A673 (cell line): ENCODE measurements at regions of chr6 and their contacts with region 1.

Region 1: DNA sequence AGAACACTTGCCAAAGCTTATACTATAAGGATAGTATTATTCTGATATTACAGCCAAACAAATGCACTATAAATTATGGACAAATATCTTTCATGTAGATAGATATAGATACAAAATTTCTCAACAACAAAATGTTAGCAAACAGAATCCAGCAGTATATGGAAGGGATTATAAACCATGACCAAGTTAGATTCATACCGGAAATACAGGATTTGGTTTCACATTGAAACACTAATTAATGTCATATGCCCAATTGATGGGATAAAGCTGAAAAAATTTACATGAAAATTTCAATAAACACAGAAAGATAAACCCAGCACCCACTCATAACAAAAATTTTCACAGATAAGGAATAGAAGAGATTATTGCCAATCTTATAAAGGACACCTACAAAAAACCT is 770.3 kb upstream of the SLC35B3 start:
- DNase-seq: peak; percentile 83
- H3K4me3 ChIP-seq: no peak overlapping the region
- H3K27ac ChIP-seq: peak overlapping the region; percentile 68
- H3K4me1 ChIP-seq: peaks cover 29% of the 10 kb centered on the region
- H3K27me3 ChIP-seq: no peaks in the 10 kb centered on the region
- CTCF ChIP-seq: no peak

Region 2: DNA sequence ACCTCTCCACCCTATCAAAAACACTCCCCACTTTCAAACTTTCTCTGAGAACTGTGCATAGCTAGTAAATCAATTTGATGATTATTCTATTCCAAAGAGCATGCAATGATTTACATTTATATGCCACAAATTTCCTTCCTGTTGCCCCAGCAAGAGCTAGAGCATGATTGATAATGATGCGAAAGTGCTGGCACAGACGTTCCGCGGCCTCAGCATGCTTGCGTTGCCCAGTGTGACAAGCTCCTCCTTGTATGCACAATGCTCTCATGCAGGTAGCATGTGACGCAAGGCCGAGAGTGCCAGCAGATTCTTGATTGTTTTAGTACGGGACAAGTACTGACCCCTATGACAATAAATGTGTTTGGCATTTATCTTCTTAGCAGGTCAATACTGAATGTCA is 74.0 kb before region 1 on chr6:
- CTCF ChIA-PET with region 1: no interaction called
- POLR2A ChIA-PET with region 1: no interaction called
- intact Hi-C with region 1: loop called (anchors 5 kb)
- DNase-seq: peak; percentile 93
- H3K4me3 ChIP-seq: peak overlapping the region; percentile 1
- H3K27ac ChIP-seq: peak overlapping the region; percentile 32
- H3K4me1 ChIP-seq: peaks cover 59% of the 10 kb centered on the region
- H3K27me3 ChIP-seq: no peaks in the 10 kb centered on the region
- CTCF ChIP-seq: no peak